CD8-positive, alpha-beta T cell (primary cell): ENCODE measurements at regions of chr1 and their contacts with region 1.

Region 1: GRCh38 chr1:46527474-46528296 is 23.8 kb downstream of the KNCN start:
- DNase-seq: peak; percentile 35 to 78 (median 71)
- ATAC-seq: peak; percentile 68
- H3K4me3 ChIP-seq: no peak overlapping the region
- H3K4me3 Mint-ChIP-seq: no peak overlapping the region
- H3K27ac ChIP-seq: no peak overlapping the region
- H3K27ac Mint-ChIP-seq: no peak overlapping the region
- H3K4me1 ChIP-seq: no peaks in the 10 kb centered on the region
- H3K4me1 Mint-ChIP-seq: no peaks in the 10 kb centered on the region
- H3K27me3 ChIP-seq: no peaks in the 10 kb centered on the region
- H3K27me3 Mint-ChIP-seq: peaks cover 44% of the 10 kb centered on the region
- CTCF ChIP-seq: peak; percentile 55

Region 2: DNA sequence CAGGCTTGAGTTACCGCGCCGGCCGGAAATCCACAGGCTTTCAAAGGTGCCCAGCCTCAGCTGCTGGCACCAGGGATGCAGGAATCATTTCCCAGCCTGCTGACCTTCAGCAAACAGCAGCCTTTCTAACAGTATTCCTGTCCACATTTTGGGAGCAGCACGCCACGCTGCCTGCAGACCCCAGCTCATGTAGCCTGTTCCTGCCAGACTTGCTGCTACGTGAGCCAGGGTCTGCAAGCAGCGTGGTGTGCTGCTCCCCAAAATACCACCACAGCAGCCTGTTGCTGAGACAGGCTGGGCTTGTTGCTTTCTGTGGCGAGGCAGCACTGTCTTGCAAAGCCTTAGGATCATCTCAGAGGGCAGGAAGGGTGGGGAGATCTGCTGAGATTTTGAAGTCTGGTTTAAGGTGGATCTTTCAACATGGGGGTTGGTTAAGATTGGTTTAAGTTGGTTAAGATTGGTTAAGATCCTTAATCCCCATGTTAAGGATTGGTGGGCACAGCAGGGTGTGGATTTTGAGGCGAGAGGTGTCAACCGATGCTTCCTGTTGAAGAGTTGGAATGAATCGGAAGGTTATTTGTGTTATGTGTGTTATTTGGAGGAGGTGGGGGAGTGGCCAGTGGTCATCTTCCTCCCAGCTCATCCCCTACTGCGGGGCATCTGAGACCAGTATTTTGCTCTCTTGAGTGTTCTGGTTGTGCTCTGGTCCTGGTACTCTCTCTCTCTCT is 120.6 kb before region 1 on chr1:
- CTCF ChIA-PET with region 1: interaction called, 4 read pairs
- POLR2A ChIA-PET with region 1: no interaction called
- intact Hi-C with region 1: loop called in 1 of 2 experiments (anchors 1 kb)
- DNase-seq: peak in 2 of 9 experiments; percentile 23 to 41
- ATAC-seq: no peak
- H3K4me3 ChIP-seq: no peak overlapping the region
- H3K4me3 Mint-ChIP-seq: no peak overlapping the region
- H3K27ac ChIP-seq: no peak overlapping the region
- H3K27ac Mint-ChIP-seq: no peak overlapping the region
- H3K4me1 ChIP-seq: no peaks in the 10 kb centered on the region
- H3K4me1 Mint-ChIP-seq: peaks cover 4% of the 10 kb centered on the region
- H3K27me3 ChIP-seq: no peaks in the 10 kb centered on the region
- H3K27me3 Mint-ChIP-seq: no peaks in the 10 kb centered on the region
- CTCF ChIP-seq: no peak

Region 3: DNA sequence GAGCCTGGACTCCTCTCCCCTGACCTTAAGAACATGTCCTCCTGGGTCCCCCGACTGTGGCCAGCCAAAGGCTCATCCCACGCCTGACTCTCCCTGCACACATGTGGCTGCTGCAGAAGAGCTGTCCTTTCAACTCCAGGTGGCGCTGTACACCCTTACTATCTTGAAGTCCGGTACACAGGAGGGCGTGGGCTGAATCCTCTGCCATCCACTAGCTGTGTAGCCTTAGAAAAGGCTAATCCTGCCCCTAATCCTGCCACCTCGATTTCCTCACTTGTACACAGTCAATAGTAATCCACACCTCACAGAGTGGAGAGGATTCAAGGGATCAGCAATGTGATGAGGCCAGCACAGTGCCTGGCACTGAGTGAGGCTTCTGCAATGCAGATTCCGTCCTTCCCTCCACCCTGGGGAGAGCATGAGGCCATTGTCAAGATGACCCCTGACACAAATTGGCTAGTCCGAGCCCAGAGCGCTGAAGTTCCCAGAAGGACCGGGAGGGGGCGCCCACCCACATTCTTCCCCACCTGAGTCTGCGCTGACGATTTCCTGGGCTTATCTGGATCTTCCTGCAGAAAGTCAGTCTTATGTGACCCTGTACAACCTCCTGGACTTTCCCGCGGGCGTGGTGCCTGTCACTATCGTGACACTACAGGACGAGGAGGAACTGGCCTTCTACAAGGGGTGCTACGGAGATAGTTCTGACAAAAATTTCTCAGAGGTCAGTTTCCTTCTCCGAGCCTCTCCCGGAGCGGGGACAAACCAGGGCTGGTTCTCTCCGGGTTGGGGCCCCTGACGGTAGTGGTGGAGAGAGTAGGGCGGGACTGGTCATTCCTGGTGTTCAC is 85.1 kb before region 1 on chr1:
- CTCF ChIA-PET with region 1: interaction called, 57 read pairs
- POLR2A ChIA-PET with region 1: no interaction called
- intact Hi-C with region 1: loop called (anchors 1 kb)
- DNase-seq: peak; percentile 39 to 82 (median 72)
- ATAC-seq: peak; percentile 74
- H3K4me3 ChIP-seq: peak overlapping the region; percentile 49 to 58
- H3K4me3 Mint-ChIP-seq: peak overlapping the region; percentile 89
- H3K27ac ChIP-seq: no peak overlapping the region
- H3K27ac Mint-ChIP-seq: no peak overlapping the region
- H3K4me1 ChIP-seq: peaks cover 6% of the 10 kb centered on the region
- H3K4me1 Mint-ChIP-seq: peaks cover 14% of the 10 kb centered on the region
- H3K27me3 ChIP-seq: peaks cover 1 to 3% of the 10 kb centered on the region in 2 experiments
- H3K27me3 Mint-ChIP-seq: peaks cover 16% of the 10 kb centered on the region
- CTCF ChIP-seq: peak; percentile 95

Region 4: DNA sequence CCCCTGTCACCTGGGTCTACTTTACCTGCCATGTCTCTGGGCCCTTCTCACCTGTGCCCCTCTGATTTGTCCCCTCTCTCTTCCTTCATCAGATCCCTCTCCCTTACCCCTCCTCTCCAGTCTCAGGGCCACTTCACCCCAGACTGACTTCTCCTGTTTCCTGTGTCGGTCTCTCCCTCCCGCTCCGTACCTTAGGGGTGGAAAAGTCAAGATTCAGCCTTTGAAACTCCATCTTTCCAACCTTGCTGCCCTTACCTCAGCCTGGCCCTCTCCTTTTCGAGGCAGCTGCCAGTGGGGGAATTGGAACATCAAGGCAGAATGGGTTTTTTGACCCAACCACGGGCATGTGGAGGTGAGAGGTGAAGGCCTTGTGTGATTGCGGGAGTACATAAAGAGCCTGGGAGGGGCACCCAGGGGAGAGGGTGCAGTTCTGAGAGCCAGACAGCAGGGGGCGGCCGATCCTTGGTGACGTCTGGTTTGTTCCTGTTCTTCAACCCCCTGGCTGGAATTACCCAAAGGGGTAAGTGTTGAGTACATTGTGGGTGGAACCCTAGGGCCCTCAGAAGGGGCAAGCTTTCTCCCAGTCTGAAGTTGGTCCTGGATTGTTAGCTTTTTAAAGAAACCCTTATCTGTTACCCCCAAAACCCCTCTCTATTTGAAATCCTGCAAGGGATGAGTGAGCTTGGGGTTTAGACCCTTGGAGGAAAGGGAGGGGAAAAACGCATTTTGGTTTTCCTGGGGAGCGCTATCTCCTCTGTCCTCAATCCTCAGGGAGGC is 50.3 kb before region 1 on chr1:
- CTCF ChIA-PET with region 1: interaction called, 14 read pairs
- POLR2A ChIA-PET with region 1: no interaction called
- intact Hi-C with region 1: loop called (anchors 1 kb)
- DNase-seq: peak; percentile 52 to 79 (median 73)
- ATAC-seq: peak; percentile 97
- H3K4me3 ChIP-seq: no peak overlapping the region
- H3K4me3 Mint-ChIP-seq: no peak overlapping the region
- H3K27ac ChIP-seq: no peak overlapping the region
- H3K27ac Mint-ChIP-seq: no peak overlapping the region
- H3K4me1 ChIP-seq: no peaks in the 10 kb centered on the region
- H3K4me1 Mint-ChIP-seq: no peaks in the 10 kb centered on the region
- H3K27me3 ChIP-seq: peaks cover 0 to 6% of the 10 kb centered on the region in 2 experiments
- H3K27me3 Mint-ChIP-seq: peaks cover 28% of the 10 kb centered on the region
- CTCF ChIP-seq: peak; percentile 84

Region 5: GRCh38 chr1:46547481-46548383 is 20.0 kb after region 1 on chr1:
- CTCF ChIA-PET with region 1: interaction called, 17 read pairs
- POLR2A ChIA-PET with region 1: interaction called, 3 read pairs
- intact Hi-C with region 1: no loop called
- DNase-seq: peak in 2 of 9 experiments; percentile 51 to 67
- ATAC-seq: no peak
- H3K4me3 ChIP-seq: no peak overlapping the region
- H3K4me3 Mint-ChIP-seq: no peak overlapping the region
- H3K27ac ChIP-seq: no peak overlapping the region
- H3K27ac Mint-ChIP-seq: no peak overlapping the region
- H3K4me1 ChIP-seq: peaks cover 13% of the 10 kb centered on the region
- H3K4me1 Mint-ChIP-seq: peaks cover 15% of the 10 kb centered on the region
- H3K27me3 ChIP-seq: peaks cover 9 to 15% of the 10 kb centered on the region in 2 experiments
- H3K27me3 Mint-ChIP-seq: peaks cover 41% of the 10 kb centered on the region
- CTCF ChIP-seq: peak; percentile 33

Region 6: DNA sequence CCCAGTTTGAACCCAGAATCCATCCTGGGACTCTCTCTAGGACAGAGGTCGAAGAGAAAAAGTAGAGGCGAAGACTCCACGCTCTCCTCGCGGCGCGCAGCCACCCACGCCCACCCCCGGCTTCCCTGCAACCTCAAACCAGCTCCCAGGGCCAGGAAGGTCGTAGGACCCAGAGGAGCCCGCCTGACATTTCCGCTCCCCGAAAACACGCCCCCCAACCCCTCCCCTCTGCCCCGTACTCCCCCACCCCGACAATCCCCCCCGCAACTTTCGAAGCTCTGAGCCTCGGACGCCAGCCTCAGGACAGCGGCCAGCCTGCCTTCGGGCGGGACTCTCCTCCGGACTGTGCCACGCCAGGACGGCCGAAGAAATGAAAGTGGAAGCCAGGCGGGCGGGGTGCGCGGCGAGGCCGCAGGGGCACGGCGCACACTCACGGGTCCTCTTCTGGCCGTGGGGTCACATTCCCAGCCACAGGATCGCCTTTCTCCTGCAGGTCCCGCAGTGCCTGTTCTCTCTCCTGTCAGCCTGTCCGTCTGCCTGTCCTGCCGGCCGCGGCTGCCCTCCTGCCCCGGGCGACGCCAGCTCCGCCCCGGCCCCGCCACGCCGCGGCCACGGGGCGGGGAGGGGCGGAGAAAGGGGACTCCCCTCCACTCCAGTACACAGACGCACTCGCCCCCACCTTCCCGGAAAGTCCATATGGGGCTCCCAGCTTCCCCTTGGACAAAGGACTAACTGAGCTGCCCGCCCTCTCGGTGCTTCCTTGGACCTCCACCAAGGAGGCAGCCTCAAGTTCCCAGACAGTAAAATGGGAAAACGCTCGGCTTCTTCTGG is 88.8 kb after region 1 on chr1 and contains the start of gene MOB3C:
- CTCF ChIA-PET with region 1: interaction called, 4 read pairs
- POLR2A ChIA-PET with region 1: no interaction called
- intact Hi-C with region 1: loop called in 1 of 2 experiments (anchors 5 kb)
- DNase-seq: peak in 8 of 9 experiments; percentile 49 to 82 (median 73)
- ATAC-seq: peak; percentile 83
- H3K4me3 ChIP-seq: peak within 1 kb of the TSS; percentile 91 to 96
- H3K4me3 Mint-ChIP-seq: peak within 1 kb of the TSS; percentile 90
- H3K27ac ChIP-seq: peak within 1 kb of the TSS; percentile 88 to 89
- H3K27ac Mint-ChIP-seq: peak within 1 kb of the TSS; percentile 92
- H3K4me1 ChIP-seq: peaks cover 47% of the 10 kb centered on the region
- H3K4me1 Mint-ChIP-seq: peaks cover 51% of the 10 kb centered on the region
- H3K27me3 ChIP-seq: no peaks in the 10 kb centered on the region
- H3K27me3 Mint-ChIP-seq: no peaks in the 10 kb centered on the region
- CTCF ChIP-seq: no peak
- total RNA-seq, gene MOB3C: 8.0 to 8.6 TPM

Region 7: GRCh38 chr1:46724991-46725735 is 197.5 kb after region 1 on chr1:
- CTCF ChIA-PET with region 1: interaction called, 30 read pairs
- POLR2A ChIA-PET with region 1: interaction called, 3 read pairs
- intact Hi-C with region 1: no loop called
- DNase-seq: peak; percentile 42 to 86 (median 69)
- ATAC-seq: peak; percentile 100
- H3K4me3 ChIP-seq: no peak overlapping the region
- H3K4me3 Mint-ChIP-seq: no peak overlapping the region
- H3K27ac ChIP-seq: no peak overlapping the region
- H3K27ac Mint-ChIP-seq: no peak overlapping the region
- H3K4me1 ChIP-seq: no peaks in the 10 kb centered on the region
- H3K4me1 Mint-ChIP-seq: peaks cover 2% of the 10 kb centered on the region
- H3K27me3 ChIP-seq: no peaks in the 10 kb centered on the region
- H3K27me3 Mint-ChIP-seq: peaks cover 36% of the 10 kb centered on the region
- CTCF ChIP-seq: peak; percentile 60